GM10248 (cell line): ENCODE measurements at regions of chr7 and their contacts with region 1.

Region 1: DNA sequence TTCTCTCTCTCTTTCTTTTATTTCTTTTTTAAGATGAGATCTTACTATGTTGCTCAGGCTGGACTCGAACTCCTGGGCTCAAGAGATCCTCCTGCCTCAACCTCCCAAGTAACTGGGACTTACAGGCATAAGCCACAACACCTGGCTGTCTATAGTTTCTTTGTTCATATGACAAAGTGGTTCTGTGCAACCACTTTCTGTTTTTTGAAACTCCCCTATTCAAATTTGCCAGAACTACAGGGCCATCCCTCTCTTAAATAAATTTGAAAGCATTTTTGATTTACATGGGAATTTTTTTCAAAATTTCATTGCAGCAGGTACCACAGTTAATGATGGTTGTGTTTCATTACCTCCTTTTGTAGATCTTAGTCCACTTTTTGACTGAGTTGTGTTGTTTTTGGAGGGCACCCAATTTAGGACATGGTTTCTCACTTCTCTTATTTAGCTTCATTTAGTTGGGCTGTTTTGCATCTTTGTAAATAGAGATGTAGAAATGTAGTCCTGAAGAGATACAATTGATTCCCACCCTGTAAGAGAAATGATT is 119.2 kb downstream of the LRRC4 start:
- DNase-seq: peak; percentile 39
- CTCF ChIP-seq: no peak

Region 2: GRCh38 chr7:127927348-127927696 is 15.3 kb after region 1 on chr7:
- CTCF ChIA-PET with region 1: interaction called, 11 read pairs
- POLR2A ChIA-PET with region 1: no interaction called
- DNase-seq: no peak
- CTCF ChIP-seq: no peak